Activated T-helper 1 cell treated with anti-CD3 and anti-CD28 coated beads, Interleukin-12 subunit alpha, Interleukin-12 subunit beta, Interleukin-2, Interleukin-4 antibody, amounts not matched to agents 30 ng/mL and 10 ng/mL and 1 ng/mL, durations not matched to agents 14 hours and 24 hours and 36 hours (primary cell): ENCODE measurements at regions of chr2 and their contacts with region 1.

Region 1: GRCh38 chr2:157443795-157444640 is at the start of gene CYTIP:
- DNase-seq: peak; percentile 73
- H3K4me3 Mint-ChIP-seq: peak within 1 kb of the TSS; percentile 98
- H3K27ac Mint-ChIP-seq: peak within 1 kb of the TSS; percentile 99
- H3K4me1 Mint-ChIP-seq: peaks cover 58% of the 10 kb centered on the region
- H3K27me3 Mint-ChIP-seq: no peaks in the 10 kb centered on the region
- total RNA-seq, gene CYTIP: 296 and 302 TPM in 2 replicates

Region 2: GRCh38 chr2:157261199-157261783 is 182.7 kb before region 1 on chr2:
- intact Hi-C with region 1: loop called (anchors 5 kb)
- DNase-seq: peak; percentile 12
- H3K4me3 Mint-ChIP-seq: peak overlapping the region; percentile 57
- H3K27ac Mint-ChIP-seq: peak overlapping the region; percentile 86
- H3K4me1 Mint-ChIP-seq: peaks cover 37% of the 10 kb centered on the region
- H3K27me3 Mint-ChIP-seq: peaks cover 2% of the 10 kb centered on the region

Region 3: GRCh38 chr2:157413326-157414035 is 30.5 kb before region 1 on chr2:
- intact Hi-C with region 1: loop called (anchors 1 kb)
- DNase-seq: peak; percentile 60
- H3K4me3 Mint-ChIP-seq: peak overlapping the region; percentile 82
- H3K27ac Mint-ChIP-seq: peak overlapping the region; percentile 91
- H3K4me1 Mint-ChIP-seq: peaks cover 84% of the 10 kb centered on the region
- H3K27me3 Mint-ChIP-seq: no peaks in the 10 kb centered on the region

Region 4: GRCh38 chr2:157460384-157460837 is 16.4 kb after region 1 on chr2:
- intact Hi-C with region 1: loop called (anchors 1 kb)
- DNase-seq: no peak
- H3K4me3 Mint-ChIP-seq: peak overlapping the region; percentile 79
- H3K27ac Mint-ChIP-seq: peak overlapping the region; percentile 82
- H3K4me1 Mint-ChIP-seq: peaks cover 97% of the 10 kb centered on the region
- H3K27me3 Mint-ChIP-seq: no peaks in the 10 kb centered on the region

Region 5: DNA sequence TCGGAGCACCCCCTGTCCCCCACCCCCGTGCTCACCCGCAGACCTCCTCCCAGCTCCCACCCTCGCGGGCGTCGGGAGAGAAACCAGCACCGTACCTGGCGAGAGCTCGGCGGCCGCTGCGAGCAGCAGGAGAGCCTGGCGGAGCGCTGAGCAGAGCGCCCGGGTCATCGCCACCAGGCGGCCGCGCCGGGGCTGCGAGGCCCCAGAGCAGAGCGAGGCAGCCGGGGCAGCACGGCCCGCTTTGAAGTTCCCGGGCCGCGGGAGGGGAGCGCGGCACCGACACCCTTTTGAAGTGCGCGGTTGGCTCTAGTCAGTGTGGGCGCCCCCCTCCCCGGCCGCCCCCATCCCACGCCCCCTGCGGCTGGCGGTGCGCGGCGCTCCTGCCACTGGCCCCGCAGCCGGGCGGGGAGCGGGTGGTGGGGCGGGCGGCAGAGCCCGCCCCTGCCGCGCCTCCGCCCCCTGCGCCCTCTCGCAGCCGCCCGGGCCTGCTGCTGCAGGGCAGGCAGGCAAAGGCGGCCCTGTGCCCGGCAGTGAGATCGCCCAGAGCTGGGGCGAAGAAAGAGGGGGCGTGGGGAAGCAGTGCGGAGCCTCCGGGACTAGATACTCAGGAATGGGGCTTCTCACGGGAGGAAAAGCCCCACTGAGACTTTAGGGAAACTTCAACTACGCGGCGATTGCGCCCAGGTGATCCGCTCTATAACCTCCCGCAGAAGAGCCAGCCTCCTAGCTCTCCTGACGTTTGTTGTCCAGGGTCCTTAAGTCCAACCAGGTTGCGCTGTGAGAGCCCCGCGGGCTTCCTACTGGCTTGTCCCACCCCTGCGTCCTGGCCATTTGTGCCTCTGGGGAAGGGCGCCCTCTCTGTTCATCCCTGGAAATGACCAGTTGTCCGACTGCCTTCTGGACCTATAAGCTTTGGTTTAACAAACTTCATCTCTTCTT is 184.7 kb after region 1 on chr2 and contains the start of gene ACVR1C:
- intact Hi-C with region 1: loop called (anchors 1 kb)
- DNase-seq: peak; percentile 63
- H3K4me3 Mint-ChIP-seq: peak within 1 kb of the TSS; percentile 88
- H3K27ac Mint-ChIP-seq: peak within 1 kb of the TSS; percentile 55
- H3K4me1 Mint-ChIP-seq: peaks cover 28% of the 10 kb centered on the region
- H3K27me3 Mint-ChIP-seq: peaks cover 15% of the 10 kb centered on the region
- total RNA-seq, gene ACVR1C: 0.59 and 1.1 TPM in 2 replicates